PC-9 (cell line): ENCODE measurements at regions of chr5 and their contacts with region 1.

Region 1: GRCh38 chr5:170151097-170151831 is 45.6 kb downstream of the FOXI1 start:
- DNase-seq: peak; percentile 100
- H3K4me3 ChIP-seq: no peak overlapping the region; the same call in 1 of the 2 replicates
- H3K27ac ChIP-seq: peak overlapping the region; percentile 91
- H3K4me1 ChIP-seq: peaks cover 55% of the 10 kb centered on the region
- H3K27me3 ChIP-seq: no peaks in the 10 kb centered on the region
- CTCF ChIP-seq: no peak

Region 2: DNA sequence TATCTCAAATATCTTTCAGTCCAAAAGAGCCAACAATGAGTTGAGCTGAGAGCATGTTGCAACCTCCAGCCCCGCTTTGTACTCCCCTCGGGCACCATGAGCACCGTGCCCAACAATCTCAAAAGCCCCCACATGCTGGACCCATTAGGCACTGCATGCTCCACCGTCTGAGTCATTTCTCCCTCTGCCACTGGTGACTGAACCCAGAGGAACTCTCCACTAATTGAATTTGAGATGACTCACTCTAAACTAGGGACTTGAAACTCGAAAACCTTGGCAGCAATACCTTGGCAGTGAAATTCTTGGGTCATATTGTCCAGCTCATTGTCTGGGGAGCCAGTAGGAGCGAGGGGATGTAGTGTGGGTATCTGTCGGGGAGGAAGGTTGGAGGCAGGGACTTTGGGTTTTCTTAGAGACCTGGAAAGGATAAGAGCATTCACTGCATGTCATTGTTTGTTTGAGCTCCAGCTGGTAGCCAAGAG is 800.5 kb before region 1 on chr5:
- CTCF ChIA-PET with region 1: no interaction called
- POLR2A ChIA-PET with region 1: no interaction called
- intact Hi-C with region 1: loop called (anchors 2 kb)
- DNase-seq: peak; percentile 86 to 98
- H3K4me3 ChIP-seq: no peak overlapping the region
- H3K27ac ChIP-seq: peak overlapping the region; percentile 98
- H3K4me1 ChIP-seq: peaks cover 66% of the 10 kb centered on the region
- H3K27me3 ChIP-seq: no peaks in the 10 kb centered on the region
- CTCF ChIP-seq: no peak

Region 3: DNA sequence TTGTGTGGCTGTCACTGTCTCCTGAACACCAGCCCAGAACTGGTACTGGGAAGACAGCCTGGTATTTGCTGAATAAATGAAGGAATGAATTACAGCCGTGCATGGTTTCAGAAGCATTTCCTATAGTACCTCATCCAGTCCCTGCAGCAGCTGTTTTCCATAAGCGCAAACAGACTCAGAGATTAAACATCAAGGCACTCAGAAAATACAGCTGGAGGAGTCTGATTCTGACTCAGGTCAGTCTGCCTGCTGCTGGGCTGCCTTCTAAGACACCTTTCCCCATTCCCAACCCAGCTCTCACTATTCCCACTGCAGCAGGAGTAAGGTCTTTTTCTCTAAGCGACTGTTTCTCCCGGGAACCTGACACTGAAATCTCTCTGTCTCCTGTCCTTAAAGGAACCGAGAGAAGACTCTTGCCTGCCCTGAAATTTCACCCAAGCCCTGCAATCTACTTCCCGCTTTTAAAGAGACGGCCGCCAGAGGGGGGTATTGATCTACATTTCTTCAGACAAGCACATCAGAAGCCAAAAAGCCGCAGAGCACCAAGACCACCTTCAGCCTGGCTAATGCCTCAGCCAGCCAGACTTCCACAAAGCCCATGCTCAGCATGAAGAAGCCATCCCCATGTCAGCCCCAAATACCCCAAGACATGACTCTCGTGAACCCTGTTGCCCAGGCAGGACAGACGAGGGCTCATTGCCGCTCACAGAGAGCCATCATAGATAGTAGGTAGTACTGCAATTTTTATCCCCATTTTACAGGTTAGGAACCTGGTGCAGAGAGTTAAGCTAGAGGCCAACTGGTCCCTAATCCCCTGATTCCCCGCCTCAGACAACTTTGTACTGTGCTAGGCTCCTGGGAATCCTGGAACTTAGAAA is 51.0 kb before region 1 on chr5:
- CTCF ChIA-PET with region 1: no interaction called
- POLR2A ChIA-PET with region 1: no interaction called
- intact Hi-C with region 1: loop called (anchors 1 kb)
- DNase-seq: peak; percentile 69 to 81
- H3K4me3 ChIP-seq: no peak overlapping the region
- H3K27ac ChIP-seq: peak overlapping the region; percentile 31; the same call in 1 of the 2 replicates
- H3K4me1 ChIP-seq: peaks cover 41% of the 10 kb centered on the region
- H3K27me3 ChIP-seq: no peaks in the 10 kb centered on the region
- CTCF ChIP-seq: peak; percentile 93

Region 4: DNA sequence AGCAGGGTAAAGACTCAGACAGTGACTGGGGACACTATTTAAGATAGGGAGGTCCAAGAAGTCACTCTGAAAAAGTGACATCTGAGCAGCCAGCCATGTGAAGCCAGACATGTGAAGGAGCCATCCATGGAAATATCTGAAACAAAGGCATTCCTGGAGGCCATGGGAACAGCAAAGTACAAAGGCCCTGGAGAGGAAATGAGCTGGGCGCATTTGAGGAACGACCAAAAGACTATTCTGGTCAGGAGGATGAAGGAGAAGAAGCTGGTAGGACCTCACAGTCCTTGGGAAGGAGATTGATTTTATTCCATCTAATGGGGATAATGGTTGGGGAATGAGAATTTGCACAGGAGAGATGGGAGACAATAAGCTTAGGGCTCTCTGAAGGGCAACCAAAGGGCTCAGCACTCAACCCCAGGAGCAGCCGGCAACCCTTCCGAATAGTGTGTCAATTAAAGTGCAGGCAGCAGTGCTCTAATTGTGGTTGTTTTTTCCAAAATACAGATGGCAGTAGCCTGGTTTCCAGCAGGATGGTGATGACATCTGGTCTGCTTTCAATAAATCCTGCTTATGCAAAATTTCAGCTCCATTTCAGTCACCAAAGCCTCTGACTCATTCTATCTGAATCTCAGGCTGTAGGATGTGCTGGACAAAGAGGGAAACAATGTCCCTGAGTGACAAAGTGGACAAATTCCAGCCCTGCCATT is 18.8 kb before region 1 on chr5:
- CTCF ChIA-PET with region 1: no interaction called
- POLR2A ChIA-PET with region 1: no interaction called
- intact Hi-C with region 1: loop called (anchors 1 kb)
- DNase-seq: peak; percentile 37 to 80
- H3K4me3 ChIP-seq: no peak overlapping the region
- H3K27ac ChIP-seq: peak overlapping the region; percentile 78
- H3K4me1 ChIP-seq: peaks cover 57% of the 10 kb centered on the region
- H3K27me3 ChIP-seq: no peaks in the 10 kb centered on the region
- CTCF ChIP-seq: no peak

Region 5: GRCh38 chr5:170162626-170163321 is 11.5 kb after region 1 on chr5:
- CTCF ChIA-PET with region 1: no interaction called
- POLR2A ChIA-PET with region 1: no interaction called
- intact Hi-C with region 1: no loop called
- DNase-seq: no peak
- H3K4me3 ChIP-seq: no peak overlapping the region
- H3K27ac ChIP-seq: no peak overlapping the region
- H3K4me1 ChIP-seq: peaks cover 10% of the 10 kb centered on the region
- H3K27me3 ChIP-seq: no peaks in the 10 kb centered on the region
- CTCF ChIP-seq: no peak

Region 6: GRCh38 chr5:170183816-170184687 is 32.8 kb after region 1 on chr5:
- CTCF ChIA-PET with region 1: interaction called, 7 read pairs
- POLR2A ChIA-PET with region 1: no interaction called
- intact Hi-C with region 1: loop called (anchors 1 kb)
- DNase-seq: peak in 1 of 2 experiments; percentile 80
- H3K4me3 ChIP-seq: no peak overlapping the region
- H3K27ac ChIP-seq: no peak overlapping the region
- H3K4me1 ChIP-seq: peaks cover 21% of the 10 kb centered on the region
- H3K27me3 ChIP-seq: no peaks in the 10 kb centered on the region
- CTCF ChIP-seq: peak; percentile 93